Mammary epithelial cell (primary cell): ENCODE measurements at regions of chr11 and their contacts with region 1.

Region 1: GRCh38 chr11:93773045-93773477 is 11.0 kb upstream of the MED17 start:
- DNase-seq: no peak
- H3K4me3 ChIP-seq: no peak overlapping the region
- H3K27ac ChIP-seq: no peak overlapping the region
- H3K4me1 ChIP-seq: no peaks in the 10 kb centered on the region
- H3K27me3 ChIP-seq: no peaks in the 10 kb centered on the region
- CTCF ChIP-seq: no peak

Region 2: GRCh38 chr11:93543292-93543977 is 229.6 kb before region 1 on chr11 and contains the start of gene SMCO4:
- CTCF ChIA-PET with region 1: no interaction called
- dilution Hi-C with region 1: no loop called
- in situ Hi-C with region 1: no loop called
- intact Hi-C with region 1: no loop called
- DNase-seq: peak; percentile 75
- H3K4me3 ChIP-seq: peak within 1 kb of the TSS; percentile 51 to 66 (median 52)
- H3K27ac ChIP-seq: no peak within 1 kb of the TSS
- H3K4me1 ChIP-seq: peaks cover 7% of the 10 kb centered on the region
- H3K27me3 ChIP-seq: no peaks in the 10 kb centered on the region
- CTCF ChIP-seq: peak; percentile 15 to 72
- total RNA-seq, gene SMCO4: 2.2 to 3.6 TPM

Region 3: GRCh38 chr11:94219771-94220170 is 446.7 kb after region 1 on chr11:
- CTCF ChIA-PET with region 1: interaction called, 11 read pairs
- dilution Hi-C with region 1: no loop called
- in situ Hi-C with region 1: no loop called
- intact Hi-C with region 1: no loop called
- DNase-seq: no peak
- H3K4me3 ChIP-seq: no peak overlapping the region
- H3K27ac ChIP-seq: no peak overlapping the region
- H3K4me1 ChIP-seq: no peaks in the 10 kb centered on the region
- H3K27me3 ChIP-seq: no peaks in the 10 kb centered on the region
- CTCF ChIP-seq: no peak